H1 (cell line): ENCODE measurements at regions of chr1 and their contacts with region 1.

Region 1: DNA sequence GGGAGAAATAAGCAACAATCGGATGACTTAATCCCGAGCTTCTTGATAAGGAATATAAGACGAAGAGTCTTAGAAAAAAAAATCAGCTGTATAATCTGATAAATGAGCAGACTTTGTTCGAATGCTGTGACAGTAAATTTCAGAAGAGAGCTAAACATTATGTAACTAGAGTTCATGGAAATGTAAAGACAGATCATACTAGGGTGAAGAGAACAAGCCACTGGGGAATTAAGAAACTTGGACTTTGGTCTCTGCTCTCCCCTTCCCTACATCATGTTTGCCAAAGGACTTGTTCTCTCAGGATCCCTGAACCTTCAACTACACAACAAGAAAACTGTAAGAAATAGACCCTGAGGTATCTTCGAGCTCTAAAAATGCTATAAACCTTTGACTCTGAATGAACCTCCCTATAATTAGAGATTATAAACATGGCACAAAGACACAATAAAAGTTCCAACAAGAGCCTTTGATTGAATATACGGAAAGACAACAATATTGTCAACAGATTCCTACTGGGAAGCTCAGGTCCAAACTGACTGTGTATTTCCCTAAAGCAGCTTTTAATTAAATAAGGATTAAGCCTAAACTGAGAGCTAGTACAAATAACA is 27.5 kb downstream of the FRRS1 start:
- DNase-seq: no peak
- H3K4me3 ChIP-seq: no peak overlapping the region
- H3K27ac ChIP-seq: no peak overlapping the region
- H3K4me1 ChIP-seq: no peaks in the 10 kb centered on the region
- H3K27me3 ChIP-seq: no peaks in the 10 kb centered on the region
- CTCF ChIP-seq: no peak
- EP300 ChIP-seq: no peak
- POLR2A ChIP-seq: no peak
- RAD21 ChIP-seq: no peak

Region 2: GRCh38 chr1:99728494-99729235 is 10.3 kb before region 1 on chr1:
- CTCF ChIA-PET with region 1: interaction called, 53 read pairs
- POLR2A ChIA-PET with region 1: no interaction called
- DNase-seq: no peak
- H3K4me3 ChIP-seq: no peak overlapping the region
- H3K27ac ChIP-seq: no peak overlapping the region
- H3K4me1 ChIP-seq: peaks cover 0 to 9% (median 7%) of the 10 kb centered on the region in 4 experiments; a peak in 5 of 7 replicates
- H3K27me3 ChIP-seq: no peaks in the 10 kb centered on the region
- CTCF ChIP-seq: peak; percentile 42 to 99 (median 78)
- EP300 ChIP-seq: no peak
- POLR2A ChIP-seq: no peak
- RAD21 ChIP-seq: peak in 1 of 2 experiments; percentile 8; a peak in 1 of 4 replicates